Common myeloid progenitor, CD34-positive (primary cell): ENCODE measurements at regions of chr1 and their contacts with region 1.

Region 1: GRCh38 chr1:239719642-239720258 is 333.4 kb downstream of the CHRM3 start:
- DNase-seq: peak; percentile 78 to 97 (median 93)
- H3K4me3 ChIP-seq: peak overlapping the region in 6 of 7 experiments; percentile 63 to 77 (median 70)
- H3K27ac ChIP-seq: peak overlapping the region; percentile 91 to 94
- H3K4me1 ChIP-seq: peaks cover 34 to 68% (median 44%) of the 10 kb centered on the region in 4 experiments
- H3K27me3 ChIP-seq: no peaks in the 10 kb centered on the region

Region 2: DNA sequence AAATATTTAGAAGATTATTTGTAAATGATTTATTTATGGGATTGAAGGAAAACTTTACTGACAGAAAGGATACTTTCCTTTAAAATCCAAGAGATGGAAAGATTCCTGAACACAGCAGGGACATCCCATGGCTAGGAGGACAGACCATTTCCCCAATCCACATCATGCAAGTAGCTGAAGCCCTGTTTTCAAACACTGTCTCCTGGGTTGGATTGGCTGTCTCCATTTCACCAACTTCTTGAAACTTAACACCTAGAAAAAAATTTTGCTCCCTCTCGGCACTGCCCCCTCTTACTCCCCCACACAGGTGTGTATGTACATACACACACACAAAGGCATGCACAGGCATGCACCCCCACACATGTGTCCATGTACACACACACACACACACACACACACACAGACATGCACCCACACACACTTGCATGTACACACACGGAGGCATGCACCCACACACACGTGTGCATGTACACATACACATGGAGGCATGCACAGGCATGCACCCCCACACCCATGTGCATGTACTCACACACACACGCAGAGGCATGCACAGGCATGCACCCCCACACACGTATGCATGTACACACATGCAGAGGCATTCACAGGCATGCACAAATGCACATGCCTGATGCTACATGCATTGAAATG is 13.4 kb before region 1 on chr1:
- CTCF ChIA-PET with region 1: interaction called, 17 read pairs
- POLR2A ChIA-PET with region 1: interaction called, 4 read pairs
- DNase-seq: no peak
- H3K4me3 ChIP-seq: no peak overlapping the region
- H3K27ac ChIP-seq: no peak overlapping the region
- H3K4me1 ChIP-seq: peaks cover 0 to 4% (median under 1%) of the 10 kb centered on the region in 4 experiments
- H3K27me3 ChIP-seq: no peaks in the 10 kb centered on the region

Region 3: GRCh38 chr1:239733995-239734394 is 14.2 kb after region 1 on chr1:
- CTCF ChIA-PET with region 1: interaction called, 12 read pairs
- POLR2A ChIA-PET with region 1: interaction called, 5 read pairs
- DNase-seq: peak in 1 of 3 donors; percentile 19
- H3K4me3 ChIP-seq: peak overlapping the region in 1 of 7 experiments; percentile 14
- H3K27ac ChIP-seq: no peak overlapping the region
- H3K4me1 ChIP-seq: peaks cover 3 to 17% (median 5%) of the 10 kb centered on the region in 4 experiments
- H3K27me3 ChIP-seq: no peaks in the 10 kb centered on the region

Region 4: DNA sequence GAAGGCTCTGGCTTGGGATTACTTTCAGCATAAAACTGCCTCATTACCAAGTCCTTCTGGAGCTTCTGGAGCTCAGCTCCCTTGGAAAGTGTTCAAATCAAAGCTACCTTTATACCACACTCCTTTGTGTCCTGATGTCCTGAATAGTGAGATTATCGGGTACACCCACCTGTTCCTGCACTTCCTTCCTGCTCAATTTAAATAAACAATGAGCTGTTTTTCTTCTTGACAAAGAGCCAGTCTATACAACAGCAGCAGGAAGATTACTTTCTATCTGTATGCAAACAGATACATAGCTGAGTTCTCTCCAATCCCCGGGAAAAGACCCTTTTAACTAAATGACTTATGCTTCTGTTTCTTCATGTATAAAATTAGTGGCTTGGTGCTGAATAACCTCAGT is 114.0 kb after region 1 on chr1:
- CTCF ChIA-PET with region 1: no interaction called
- POLR2A ChIA-PET with region 1: no interaction called
- DNase-seq: peak; percentile 54 to 88 (median 81)
- H3K4me3 ChIP-seq: no peak overlapping the region
- H3K27ac ChIP-seq: no peak overlapping the region
- H3K4me1 ChIP-seq: peaks cover 14 to 47% (median 26%) of the 10 kb centered on the region in 4 experiments
- H3K27me3 ChIP-seq: no peaks in the 10 kb centered on the region